HEK293T (cell line): ENCODE measurements at regions of chr4 and their contacts with region 1.

Region 1: DNA sequence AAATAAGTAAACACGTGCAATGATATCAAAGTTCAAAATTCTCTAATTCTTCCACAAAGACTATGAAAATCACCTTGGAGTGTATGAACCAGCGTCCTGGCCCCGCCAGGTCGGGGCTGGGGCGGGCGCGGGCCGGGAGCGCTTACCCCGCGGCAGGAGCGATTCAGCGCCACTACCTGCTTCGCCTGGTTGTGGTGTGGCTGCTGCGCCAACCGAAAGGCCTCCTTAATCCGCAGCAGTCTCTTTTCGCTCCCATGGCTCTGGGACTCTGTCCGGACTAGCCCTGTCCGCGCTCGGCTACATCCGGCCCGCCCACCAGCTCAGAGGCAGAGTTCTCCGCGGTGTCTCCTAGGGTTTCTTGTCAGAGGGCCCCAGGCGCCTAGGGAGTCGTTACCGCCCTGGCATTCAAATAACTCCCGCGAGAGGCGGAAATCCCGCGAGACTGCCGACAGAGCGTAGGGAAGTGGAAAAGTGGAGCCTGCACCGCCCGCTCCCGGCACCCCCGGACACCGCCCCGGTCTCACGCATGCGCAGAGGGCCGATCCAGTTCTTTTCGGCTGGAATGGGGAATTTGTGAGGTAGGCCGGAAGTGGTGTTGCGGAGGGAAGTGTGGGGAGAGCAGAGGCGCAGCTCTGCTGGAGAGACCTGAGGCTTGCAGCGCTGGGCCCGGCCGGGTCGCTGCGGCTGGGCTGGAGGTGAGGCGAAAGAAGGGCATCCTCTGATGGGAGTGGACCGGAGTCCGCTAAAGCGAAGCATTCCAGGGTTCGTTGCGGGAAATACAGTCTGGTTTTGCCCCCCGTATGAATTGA is at the start of gene FAM200B:
- DNase-seq: peak; percentile 99

Region 2: DNA sequence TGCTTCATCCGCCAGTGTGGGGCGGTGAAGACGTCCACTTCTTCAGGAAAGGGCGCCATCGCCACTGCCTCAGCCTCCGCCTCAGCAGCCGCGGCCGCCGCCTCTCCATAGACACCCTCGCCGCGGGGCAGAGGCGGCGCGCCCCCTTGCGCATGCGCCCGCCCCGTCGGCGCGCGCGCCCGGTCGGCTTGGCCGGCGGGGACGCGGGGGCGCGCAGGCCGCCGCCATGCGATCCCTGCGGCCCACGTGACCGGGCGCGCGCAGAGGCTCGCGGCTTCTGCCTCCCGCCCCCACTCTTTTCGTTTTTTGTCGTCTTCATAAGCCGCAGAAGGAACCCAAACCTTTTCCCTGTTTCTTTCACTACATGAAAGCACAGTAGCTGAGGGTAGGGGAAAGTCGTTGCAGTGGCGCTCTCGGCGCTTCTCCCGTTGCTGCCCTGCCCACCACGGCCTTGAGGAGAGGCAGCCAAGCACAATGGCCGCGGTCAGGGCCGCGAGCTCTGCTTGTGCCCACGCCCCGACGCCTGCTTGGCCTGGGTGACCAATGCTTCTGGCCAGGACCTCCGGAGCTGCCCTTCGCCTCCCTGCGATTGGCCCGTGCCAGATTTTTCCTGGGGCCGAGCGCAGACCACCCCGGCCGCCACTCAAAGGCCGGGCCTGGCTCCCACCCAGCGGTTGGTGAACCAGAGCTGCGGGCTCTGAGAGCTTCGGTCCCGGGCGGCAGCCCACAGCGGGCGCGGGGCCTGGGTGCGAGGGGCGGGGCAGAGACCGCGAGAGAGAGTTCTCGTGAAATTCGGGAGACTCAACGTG is 26.0 kb before region 1 on chr4 and contains the start of gene FBXL5:
- CTCF ChIA-PET with region 1: interaction called, 3 read pairs
- POLR2A ChIA-PET with region 1: interaction called, 36 read pairs
- DNase-seq: peak; percentile 94